Mammary epithelial cell (primary cell): ENCODE measurements at regions of chr6 and their contacts with region 1.

Region 1: GRCh38 chr6:142659661-142660060 is 285.3 kb downstream of the HIVEP2 start:
- DNase-seq: no peak
- H3K4me3 ChIP-seq: no peak overlapping the region
- H3K27ac ChIP-seq: no peak overlapping the region
- H3K4me1 ChIP-seq: no peaks in the 10 kb centered on the region
- H3K27me3 ChIP-seq: no peaks in the 10 kb centered on the region
- CTCF ChIP-seq: no peak

Region 2: GRCh38 chr6:142561511-142562265 is 98.0 kb before region 1 on chr6:
- CTCF ChIA-PET with region 1: no interaction called
- dilution Hi-C with region 1: loop called (anchors 5 kb)
- in situ Hi-C with region 1: no loop called
- intact Hi-C with region 1: no loop called
- DNase-seq: no peak
- H3K4me3 ChIP-seq: no peak overlapping the region
- H3K27ac ChIP-seq: no peak overlapping the region
- H3K4me1 ChIP-seq: no peaks in the 10 kb centered on the region
- H3K27me3 ChIP-seq: no peaks in the 10 kb centered on the region
- CTCF ChIP-seq: no peak

Region 3: GRCh38 chr6:142702501-142703460 is 43.1 kb after region 1 on chr6:
- CTCF ChIA-PET with region 1: no interaction called
- dilution Hi-C with region 1: no loop called
- in situ Hi-C with region 1: no loop called
- intact Hi-C with region 1: no loop called
- DNase-seq: peak; percentile 27
- H3K4me3 ChIP-seq: no peak overlapping the region
- H3K27ac ChIP-seq: no peak overlapping the region
- H3K4me1 ChIP-seq: peaks cover 5% of the 10 kb centered on the region
- H3K27me3 ChIP-seq: no peaks in the 10 kb centered on the region
- CTCF ChIP-seq: no peak